ENCODE measurements at regions of chr2 and their contacts with region 1.

Region 1: DNA sequence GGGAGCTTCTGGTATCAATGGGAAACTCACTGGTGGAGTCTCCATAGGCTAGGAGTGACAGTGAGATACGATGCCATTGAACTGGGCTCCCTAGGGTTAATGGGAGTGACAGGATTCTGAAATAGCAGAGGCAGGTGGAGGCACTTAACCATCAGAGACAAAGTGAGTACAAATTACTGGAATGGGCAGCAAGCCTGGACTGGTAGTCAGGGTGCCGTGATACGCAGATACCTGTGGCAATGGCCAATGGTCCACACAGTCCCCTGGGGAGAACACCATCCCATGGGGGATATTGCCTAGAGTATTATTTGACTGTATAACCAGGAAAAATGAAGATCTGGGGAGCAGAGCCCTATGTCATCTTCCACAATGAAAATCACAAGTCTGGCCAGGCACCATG is 17.3 kb downstream of the CHCHD5 start:
- DNase-seq: peak in 1 of 2 experiments; percentile 12
- H3K4me3 ChIP-seq: no peak overlapping the region
- H3K4me3 Mint-ChIP-seq: no peak overlapping the region
- H3K27ac Mint-ChIP-seq: no peak overlapping the region
- H3K4me1 ChIP-seq: peaks cover 7% of the 10 kb centered on the region
- H3K4me1 Mint-ChIP-seq: peaks cover 14% of the 10 kb centered on the region
- H3K27me3 ChIP-seq: no peaks in the 10 kb centered on the region
- H3K27me3 Mint-ChIP-seq: no peaks in the 10 kb centered on the region
- CTCF ChIP-seq: no peak

Region 2: GRCh38 chr2:110732422-110733413 is 1869.0 kb before region 1 on chr2 and contains the start of gene ACOXL:
- CTCF ChIA-PET with region 1: no interaction called
- POLR2A ChIA-PET with region 1: no interaction called
- intact Hi-C with region 1: no loop called
- DNase-seq: peak; percentile 77 to 82
- H3K4me3 ChIP-seq: peak within 1 kb of the TSS; percentile 47
- H3K4me3 Mint-ChIP-seq: peak within 1 kb of the TSS; percentile 80
- H3K27ac Mint-ChIP-seq: no peak within 1 kb of the TSS
- H3K4me1 ChIP-seq: peaks cover 29% of the 10 kb centered on the region
- H3K4me1 Mint-ChIP-seq: peaks cover 17% of the 10 kb centered on the region
- H3K27me3 ChIP-seq: no peaks in the 10 kb centered on the region; the same call in 1 of the 2 replicates
- H3K27me3 Mint-ChIP-seq: peaks cover 3% of the 10 kb centered on the region
- CTCF ChIP-seq: no peak
- total RNA-seq, gene ACOXL: 2.6 and 2.9 TPM in 2 replicates

Region 3: DNA sequence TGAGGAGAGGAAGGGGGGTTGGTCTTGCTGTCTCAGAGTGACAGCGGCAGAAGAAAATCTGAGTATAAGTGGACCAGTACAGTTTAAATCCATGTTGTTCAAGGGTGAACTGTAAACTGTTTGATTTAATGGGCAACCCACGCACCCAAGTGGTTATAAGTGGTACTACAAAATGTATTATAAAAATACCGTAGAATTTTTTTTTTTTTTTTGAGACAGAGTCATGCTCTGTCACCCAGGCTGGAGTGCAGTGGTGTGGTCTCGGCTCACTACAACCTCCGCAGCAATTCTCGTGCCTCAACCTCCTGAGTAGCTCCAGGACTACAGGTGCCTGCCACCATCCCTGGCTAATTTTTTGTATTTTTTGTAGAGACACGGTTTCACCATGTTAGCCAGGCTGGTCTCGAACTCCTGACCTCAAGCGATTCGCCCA is 19.4 kb before region 1 on chr2:
- CTCF ChIA-PET with region 1: no interaction called
- POLR2A ChIA-PET with region 1: no interaction called
- intact Hi-C with region 1: no loop called
- DNase-seq: peak; percentile 33 to 61
- H3K4me3 ChIP-seq: no peak overlapping the region
- H3K4me3 Mint-ChIP-seq: no peak overlapping the region
- H3K27ac Mint-ChIP-seq: no peak overlapping the region
- H3K4me1 ChIP-seq: peaks cover 13% of the 10 kb centered on the region
- H3K4me1 Mint-ChIP-seq: peaks cover 8% of the 10 kb centered on the region
- H3K27me3 ChIP-seq: no peaks in the 10 kb centered on the region
- H3K27me3 Mint-ChIP-seq: no peaks in the 10 kb centered on the region
- CTCF ChIP-seq: peak; percentile 44 to 56

Region 4: DNA sequence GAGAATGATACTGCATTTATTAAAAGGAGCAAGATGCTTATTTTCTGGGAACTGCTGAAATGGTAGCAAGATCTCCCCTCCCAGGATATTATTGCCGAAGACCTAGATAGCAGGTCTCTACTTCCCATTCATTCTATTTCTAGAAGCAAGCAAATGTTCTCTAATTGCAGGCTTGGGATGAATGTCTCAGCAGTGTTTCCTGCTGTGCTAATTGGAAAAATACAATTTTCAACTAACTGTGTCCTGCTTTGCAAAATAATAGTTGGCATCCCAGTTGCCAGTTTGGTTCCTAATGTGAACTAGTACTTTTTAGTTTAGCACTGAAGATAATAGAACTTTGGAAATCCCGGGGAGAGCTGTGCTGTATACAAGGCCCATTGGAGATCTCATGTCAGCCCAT is 70.0 kb after region 1 on chr2:
- CTCF ChIA-PET with region 1: no interaction called
- POLR2A ChIA-PET with region 1: interaction called, 10 read pairs
- intact Hi-C with region 1: no loop called
- DNase-seq: no peak
- H3K4me3 ChIP-seq: no peak overlapping the region
- H3K4me3 Mint-ChIP-seq: no peak overlapping the region
- H3K27ac Mint-ChIP-seq: no peak overlapping the region
- H3K4me1 ChIP-seq: peaks cover 7% of the 10 kb centered on the region
- H3K4me1 Mint-ChIP-seq: no peaks in the 10 kb centered on the region
- H3K27me3 ChIP-seq: no peaks in the 10 kb centered on the region
- H3K27me3 Mint-ChIP-seq: no peaks in the 10 kb centered on the region
- CTCF ChIP-seq: no peak

Region 5: GRCh38 chr2:112692496-112692911 is 90.8 kb after region 1 on chr2:
- CTCF ChIA-PET with region 1: interaction called, 3 read pairs
- POLR2A ChIA-PET with region 1: no interaction called
- intact Hi-C with region 1: loop called (anchors 1 kb)
- DNase-seq: peak; percentile 72 to 86
- H3K4me3 ChIP-seq: no peak overlapping the region
- H3K4me3 Mint-ChIP-seq: no peak overlapping the region
- H3K27ac Mint-ChIP-seq: peak overlapping the region; percentile 17
- H3K4me1 ChIP-seq: peaks cover 10% of the 10 kb centered on the region
- H3K4me1 Mint-ChIP-seq: peaks cover 16% of the 10 kb centered on the region
- H3K27me3 ChIP-seq: no peaks in the 10 kb centered on the region
- H3K27me3 Mint-ChIP-seq: no peaks in the 10 kb centered on the region
- CTCF ChIP-seq: no peak

Region 6: GRCh38 chr2:112985090-112985489 is 383.3 kb after region 1 on chr2:
- CTCF ChIA-PET with region 1: no interaction called
- POLR2A ChIA-PET with region 1: no interaction called
- intact Hi-C with region 1: no loop called
- DNase-seq: no peak
- H3K4me3 ChIP-seq: no peak overlapping the region
- H3K4me3 Mint-ChIP-seq: no peak overlapping the region
- H3K27ac Mint-ChIP-seq: no peak overlapping the region
- H3K4me1 ChIP-seq: 0 out of 2 replicates have a peak, but pooled peaks cover under 1% of the 10 kb centered on the region
- H3K4me1 Mint-ChIP-seq: no peaks in the 10 kb centered on the region
- H3K27me3 ChIP-seq: no peaks in the 10 kb centered on the region
- H3K27me3 Mint-ChIP-seq: no peaks in the 10 kb centered on the region
- CTCF ChIP-seq: no peak

Measured in Caco-2 (cell line).